Transverse colon (tissue), 4 donors: ENCODE measurements at regions of chr12 and their contacts with region 1.

Region 1: DNA sequence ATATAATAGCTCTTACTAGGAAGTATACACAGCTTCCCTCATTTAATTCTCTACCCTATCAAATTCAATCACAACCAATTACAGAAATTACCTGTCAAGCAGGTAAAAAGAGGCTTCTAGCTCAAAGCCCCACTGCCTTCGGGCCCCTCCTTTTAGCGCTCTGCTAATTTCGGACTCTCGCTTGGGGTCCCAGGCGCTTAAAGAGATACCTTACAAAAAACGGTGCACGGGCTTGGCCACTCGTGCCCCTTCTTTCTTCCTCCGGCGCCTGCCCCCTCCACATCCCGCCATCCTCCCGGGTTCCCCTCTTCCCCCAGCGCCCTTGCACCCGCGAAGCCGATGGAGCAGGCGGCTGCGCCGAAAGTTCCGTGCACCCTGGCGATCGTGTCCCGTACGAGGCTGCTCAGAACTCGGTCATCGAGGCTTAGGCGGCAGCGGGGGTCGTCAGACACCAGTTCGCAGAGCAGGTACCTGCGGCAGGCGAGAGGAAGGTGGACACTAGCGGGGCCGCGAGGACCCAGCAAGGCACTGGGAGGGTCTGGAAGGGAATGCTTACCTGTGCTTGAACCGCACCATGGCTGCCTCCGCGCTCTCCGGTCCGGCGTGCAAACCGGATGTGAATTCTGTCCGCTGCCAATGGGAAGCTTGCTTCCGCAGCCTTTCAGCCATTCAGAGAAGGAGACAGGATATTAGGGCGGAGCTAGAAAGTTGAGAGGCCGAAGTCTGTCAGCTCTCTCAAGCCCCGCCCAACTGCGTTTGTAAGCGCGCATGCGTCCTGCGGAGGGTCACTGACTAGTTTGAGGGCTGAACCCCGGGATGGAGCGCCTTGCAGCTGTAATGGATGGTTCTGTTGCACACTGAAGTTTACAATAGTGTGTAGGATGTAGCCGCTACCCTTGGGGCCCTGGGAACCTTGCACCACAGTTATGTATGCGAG is at the start of gene POP5:
- DNase-seq: peak; percentile 98
- H3K4me3 ChIP-seq: peak within 1 kb of the TSS; percentile 58 to 89 (median 76)
- H3K27ac ChIP-seq: peak within 1 kb of the TSS; percentile 81 to 88 (median 84)
- H3K4me1 ChIP-seq: peaks cover 4 to 43% (median 24%) of the 10 kb centered on the region in 4 donors
- H3K27me3 ChIP-seq: no peaks in the 10 kb centered on the region
- CTCF ChIP-seq: no peak
- EP300 ChIP-seq: no peak
- POLR2A ChIP-seq: peak; percentile 82
- total RNA-seq, gene POP5: 31.5 to 56.5 (median 43.7) TPM in 3 of 4 donors, not detected in the other

Region 2: DNA sequence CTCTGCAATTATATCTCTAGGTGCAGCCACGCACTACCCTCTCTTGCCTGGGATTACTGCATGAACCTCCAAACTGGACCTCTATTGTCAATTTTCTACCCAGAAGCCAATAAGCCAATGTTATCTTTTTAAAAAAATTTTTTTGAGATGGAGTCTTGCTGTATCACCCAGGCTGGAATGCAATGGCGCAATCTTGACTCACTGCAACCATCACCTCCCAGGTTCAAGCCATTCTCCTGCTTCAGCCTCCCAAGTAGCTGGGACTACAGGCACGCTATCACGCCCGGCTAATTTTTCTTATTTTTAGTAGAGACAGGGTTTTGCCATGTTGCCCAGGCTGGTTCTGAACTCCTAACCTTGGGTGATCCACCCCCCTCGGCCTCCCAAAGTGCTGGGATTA is 304.3 kb before region 1 on chr12:
- in situ Hi-C with region 1: no loop called
- intact Hi-C with region 1: no loop called
- DNase-seq: no peak
- H3K4me3 ChIP-seq: no peak overlapping the region
- H3K27ac ChIP-seq: no peak overlapping the region
- H3K4me1 ChIP-seq: no peaks in the 10 kb centered on the region
- H3K27me3 ChIP-seq: no peaks in the 10 kb centered on the region
- CTCF ChIP-seq: no peak
- EP300 ChIP-seq: no peak
- POLR2A ChIP-seq: no peak

Region 3: DNA sequence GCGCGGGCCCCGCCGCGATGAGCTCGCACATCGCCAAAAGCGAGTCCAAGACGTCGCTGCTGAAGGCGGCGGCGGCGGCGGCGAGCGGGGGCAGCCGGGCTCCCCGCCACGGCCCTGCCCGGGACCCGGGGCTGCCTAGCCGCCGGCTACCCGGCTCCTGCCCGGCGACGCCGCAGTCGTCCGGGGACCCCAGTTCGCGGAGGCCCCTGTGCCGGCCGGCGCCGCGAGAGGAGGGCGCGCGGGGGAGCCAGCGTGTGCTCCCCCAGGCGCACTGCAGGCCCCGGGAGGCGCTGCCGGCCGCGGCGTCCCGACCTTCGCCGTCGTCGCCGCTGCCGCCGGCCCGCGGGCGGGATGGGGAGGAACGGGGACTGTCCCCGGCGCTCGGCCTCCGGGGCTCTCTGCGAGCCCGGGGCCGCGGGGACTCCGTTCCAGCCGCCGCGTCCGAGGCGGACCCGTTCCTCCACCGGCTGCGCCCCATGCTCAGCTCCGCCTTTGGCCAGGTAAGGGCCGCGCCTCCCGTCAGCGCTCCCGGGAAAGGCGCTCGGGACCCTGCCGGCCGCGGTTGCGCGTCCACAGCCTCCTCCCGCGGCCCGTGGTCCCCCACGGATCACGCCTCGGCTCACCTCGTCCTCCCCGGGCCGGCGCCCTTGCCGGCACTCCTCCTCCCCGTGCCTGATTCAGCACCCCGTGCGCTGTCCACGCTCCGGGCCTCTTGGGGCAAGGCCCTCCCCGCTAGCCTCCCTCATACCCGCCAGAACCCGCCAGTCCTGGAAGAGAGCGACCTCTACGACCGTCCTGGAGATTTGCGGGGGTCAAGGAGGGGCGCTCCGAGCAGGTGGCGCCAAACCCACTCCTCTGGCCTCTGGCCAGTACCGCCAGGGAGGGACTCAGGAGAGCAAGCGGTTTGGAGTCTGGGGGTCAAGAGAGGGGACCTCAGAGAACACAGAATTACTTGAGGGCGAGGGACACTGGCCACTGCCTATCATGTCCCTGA is 60.1 kb after region 1 on chr12:
- in situ Hi-C with region 1: loop called in 2 of 4 experiments (anchors 5 to 10 kb)
- intact Hi-C with region 1: loop called (anchors 5 kb)
- DNase-seq: peak; percentile 66
- H3K4me3 ChIP-seq: peak overlapping the region in 3 of 4 donors; percentile 40 to 72 (median 52)
- H3K27ac ChIP-seq: no peak overlapping the region
- H3K4me1 ChIP-seq: peaks cover 5 to 16% (median 14%) of the 10 kb centered on the region in 4 donors
- H3K27me3 ChIP-seq: peaks cover 66% of the 10 kb centered on the region
- CTCF ChIP-seq: no peak
- EP300 ChIP-seq: no peak
- POLR2A ChIP-seq: no peak

Region 4: GRCh38 chr12:120649442-120650232 is 68.6 kb after region 1 on chr12:
- in situ Hi-C with region 1: loop called in 2 of 4 experiments (anchors 5 to 10 kb)
- intact Hi-C with region 1: loop called (anchors 5 kb)
- DNase-seq: no peak
- H3K4me3 ChIP-seq: peak overlapping the region in 3 of 4 donors; percentile 7 to 39 (median 25)
- H3K27ac ChIP-seq: peak overlapping the region; percentile 26 to 67 (median 64)
- H3K4me1 ChIP-seq: peaks cover 0 to 21% (median 13%) of the 10 kb centered on the region in 4 donors
- H3K27me3 ChIP-seq: peaks cover 19% of the 10 kb centered on the region
- CTCF ChIP-seq: peak in 2 of 5 experiments; percentile 16 to 35
- EP300 ChIP-seq: no peak
- POLR2A ChIP-seq: no peak

Region 5: DNA sequence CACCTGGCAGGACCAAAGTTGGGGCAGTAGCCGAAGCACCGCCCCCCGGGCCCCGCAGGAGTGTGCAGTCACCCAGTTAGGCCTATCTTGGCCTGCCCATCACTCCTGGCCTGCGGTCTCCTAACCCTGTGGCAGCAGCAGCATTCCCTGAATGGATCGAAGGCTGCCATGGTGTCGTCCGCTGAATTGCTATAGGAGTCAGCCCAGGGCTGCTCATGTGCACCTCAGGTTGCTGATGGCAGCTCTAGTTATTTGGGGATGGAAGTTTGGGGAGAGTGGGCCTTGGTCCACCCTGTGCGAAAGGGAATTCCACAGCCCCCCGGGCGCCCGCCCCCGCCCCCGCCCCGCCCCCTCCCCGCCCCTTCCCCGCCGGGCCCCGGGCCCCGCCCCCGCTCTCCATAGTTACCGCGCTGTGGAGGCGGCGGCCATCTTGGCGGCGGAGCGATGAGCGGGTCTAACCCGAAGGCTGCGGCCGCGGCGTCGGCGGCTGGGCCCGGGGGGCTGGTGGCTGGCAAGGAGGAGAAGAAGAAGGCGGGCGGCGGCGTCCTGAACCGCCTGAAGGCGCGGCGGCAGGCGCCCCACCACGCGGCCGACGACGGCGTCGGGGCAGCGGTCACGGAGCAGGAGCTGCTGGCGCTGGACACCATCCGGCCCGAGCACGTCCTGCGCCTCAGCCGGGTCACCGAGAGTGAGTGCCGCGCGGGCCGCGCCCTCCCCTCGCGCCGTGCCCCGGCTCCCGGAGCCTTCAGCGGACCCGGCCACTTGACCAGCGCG is 129.2 kb after region 1 on chr12 and contains the start of gene UNC119B:
- in situ Hi-C with region 1: loop called in 2 of 4 experiments (anchors 5 to 10 kb)
- intact Hi-C with region 1: loop called (anchors 10 kb)
- DNase-seq: peak; percentile 65
- H3K4me3 ChIP-seq: peak within 1 kb of the TSS; percentile 60 to 97 (median 84)
- H3K27ac ChIP-seq: peak within 1 kb of the TSS; percentile 89 to 96 (median 91)
- H3K4me1 ChIP-seq: peaks cover 7 to 24% (median 18%) of the 10 kb centered on the region in 4 donors
- H3K27me3 ChIP-seq: no peaks in the 10 kb centered on the region
- CTCF ChIP-seq: no peak
- EP300 ChIP-seq: no peak
- POLR2A ChIP-seq: no peak
- total RNA-seq, gene UNC119B: 9.8 to 25.4 (median 21.5) TPM

Region 6: GRCh38 chr12:121110211-121110940 is 529.3 kb after region 1 on chr12:
- in situ Hi-C with region 1: no loop called
- intact Hi-C with region 1: loop called (anchors 10 kb)
- DNase-seq: peak; percentile 77
- H3K4me3 ChIP-seq: no peak overlapping the region
- H3K27ac ChIP-seq: no peak overlapping the region
- H3K4me1 ChIP-seq: peaks cover 0 to 13% (median 3%) of the 10 kb centered on the region in 4 donors
- H3K27me3 ChIP-seq: no peaks in the 10 kb centered on the region
- CTCF ChIP-seq: peak; percentile 93 to 96 (median 94)
- EP300 ChIP-seq: no peak
- POLR2A ChIP-seq: no peak